ENCODE measurements at regions of chr4 and their contacts with region 1.

Region 1: GRCh38 chr4:69156913-69157312 is 57.6 kb downstream of the UGT2B11 start:
- DNase-seq: no peak
- CTCF ChIP-seq: no peak

Region 2: DNA sequence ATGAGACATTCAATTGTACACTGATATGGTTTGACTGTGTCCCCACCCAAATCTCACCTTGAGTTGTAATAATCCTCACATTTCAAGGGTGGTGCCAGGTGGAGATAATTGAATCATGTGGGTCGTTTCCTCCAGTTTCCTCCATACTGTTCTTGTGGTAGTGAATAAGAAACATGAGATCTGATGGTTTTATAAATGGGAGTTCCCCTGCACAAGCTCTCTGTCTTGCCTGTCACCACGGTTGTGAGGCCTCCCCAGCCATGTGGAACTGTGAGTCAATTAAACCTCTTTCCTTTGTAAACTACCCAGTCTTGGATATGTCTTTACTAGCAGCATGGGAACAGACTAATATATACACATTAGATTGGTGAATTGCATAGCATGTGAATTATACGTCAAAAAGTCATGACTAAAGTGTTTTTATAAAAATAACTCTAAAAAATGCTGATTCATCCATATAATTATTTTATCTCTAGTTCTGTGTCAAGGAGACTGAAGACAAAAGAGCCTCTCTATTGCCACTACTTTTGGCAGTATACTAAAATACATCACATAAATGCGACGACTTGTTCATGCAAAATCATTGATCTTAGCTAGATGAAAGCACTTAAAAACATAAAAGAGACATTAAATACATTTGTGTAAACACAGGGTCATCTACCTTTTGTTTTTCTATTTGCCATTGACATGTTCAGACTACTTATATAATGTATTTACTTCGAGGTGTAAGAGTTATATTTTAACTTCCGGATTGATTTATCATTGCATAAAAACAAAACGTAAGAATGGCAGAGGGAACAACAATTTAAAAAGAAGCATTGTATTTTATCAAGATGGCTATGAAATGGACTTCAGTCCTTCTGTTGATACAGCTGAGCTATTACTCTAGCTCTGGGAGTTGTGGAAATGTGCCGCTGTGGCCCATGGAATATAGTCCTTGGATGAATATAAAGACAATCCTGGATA is 857.1 kb before region 1 on chr4:
- in situ Hi-C with region 1: loop called (anchors 25 kb)
- DNase-seq: no peak
- CTCF ChIP-seq: no peak

Region 3: DNA sequence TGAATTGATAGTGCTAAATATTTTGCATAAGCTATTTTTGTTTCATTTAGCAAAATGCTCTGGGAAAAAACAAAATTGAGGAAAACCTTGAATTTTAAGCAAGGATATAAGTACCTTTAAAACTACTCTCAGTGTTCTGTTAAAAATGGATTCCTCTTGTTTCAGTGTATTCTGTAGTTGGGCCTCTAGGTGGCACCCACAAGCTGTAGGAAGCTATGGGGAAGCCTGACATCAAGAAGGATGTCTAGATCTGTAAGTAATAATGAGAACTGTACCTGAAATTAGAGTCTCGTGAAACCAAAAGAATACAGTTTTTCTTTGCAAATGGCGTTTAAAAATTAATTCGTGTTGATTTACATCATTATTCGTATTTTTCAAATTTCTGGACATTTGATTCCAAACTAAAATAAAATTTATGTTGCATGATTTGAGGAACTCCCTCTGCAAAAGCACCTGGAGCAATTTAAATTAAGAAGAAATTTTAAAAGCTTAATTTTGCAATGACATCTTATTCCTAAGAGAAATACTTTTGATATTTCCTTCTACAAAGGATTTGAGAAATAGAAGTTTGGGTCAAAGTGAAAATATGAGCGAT is 658.4 kb before region 1 on chr4:
- in situ Hi-C with region 1: loop called (anchors 25 kb)
- DNase-seq: peak; percentile 37
- CTCF ChIP-seq: peak; percentile 80

Region 4: GRCh38 chr4:68654946-68655721 is 501.8 kb before region 1 on chr4:
- in situ Hi-C with region 1: no loop called
- DNase-seq: no peak
- CTCF ChIP-seq: no peak